ENCODE measurements at regions of chr22 and their contacts with region 1.

Region 1: GRCh38 chr22:30289134-30289979 is at the start of gene CASTOR1:
- DNase-seq: peak; percentile 99
- ATAC-seq: peak; percentile 91
- H3K4me3 ChIP-seq: peak within 1 kb of the TSS; percentile 56 to 87
- H3K27ac ChIP-seq: peak within 1 kb of the TSS; percentile 69 to 85
- H3K4me1 ChIP-seq: no peaks in the 10 kb centered on the region
- H3K27me3 ChIP-seq: no peaks in the 10 kb centered on the region
- total RNA-seq, gene CASTOR1: 13.5 to 14.0 TPM

Region 2: GRCh38 chr22:30121960-30122359 is 167.4 kb before region 1 on chr22:
- intact Hi-C with region 1: no loop called
- DNase-seq: no peak
- ATAC-seq: no peak
- H3K4me3 ChIP-seq: no peak overlapping the region
- H3K27ac ChIP-seq: no peak overlapping the region
- H3K4me1 ChIP-seq: no peaks in the 10 kb centered on the region
- H3K27me3 ChIP-seq: no peaks in the 10 kb centered on the region

Region 3: DNA sequence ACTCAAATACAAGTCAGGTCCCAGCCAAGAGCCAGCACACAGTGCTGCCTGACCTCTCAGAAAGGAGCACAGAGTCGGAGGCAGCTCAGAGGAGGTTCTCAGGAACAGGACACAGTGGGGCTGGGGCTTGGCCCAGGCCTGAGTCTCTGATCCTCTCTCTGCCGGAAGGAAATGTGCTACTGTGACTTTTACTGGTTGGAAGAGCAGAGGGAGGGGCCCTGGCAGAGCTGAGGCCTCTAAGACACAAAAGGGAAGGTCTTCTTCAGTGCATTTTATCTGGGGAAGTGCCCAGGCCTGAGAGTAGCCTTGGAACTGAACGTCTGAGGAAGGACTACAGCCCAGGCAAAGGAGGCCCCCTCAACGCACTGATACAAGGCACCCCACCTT is 16.2 kb after region 1 on chr22:
- intact Hi-C with region 1: loop called in 1 of 2 experiments (anchors 2 kb)
- DNase-seq: peak in 1 of 2 donors; percentile 84
- ATAC-seq: peak; percentile 74
- H3K4me3 ChIP-seq: no peak overlapping the region
- H3K27ac ChIP-seq: peak overlapping the region; percentile 61 to 90
- H3K4me1 ChIP-seq: peaks cover 5 to 11% of the 10 kb centered on the region in 2 donors
- H3K27me3 ChIP-seq: no peaks in the 10 kb centered on the region

Region 4: GRCh38 chr22:30326706-30327362 is 37.5 kb after region 1 on chr22 and contains the start of gene TBC1D10A:
- intact Hi-C with region 1: loop called (anchors 1 to 5 kb)
- DNase-seq: peak; percentile 92 to 94
- ATAC-seq: peak; percentile 93
- H3K4me3 ChIP-seq: peak within 1 kb of the TSS; percentile 69 to 96
- H3K27ac ChIP-seq: peak within 1 kb of the TSS; percentile 33 to 91
- H3K4me1 ChIP-seq: no peaks in the 10 kb centered on the region
- H3K27me3 ChIP-seq: no peaks in the 10 kb centered on the region
- total RNA-seq, gene TBC1D10A: 32.9 to 45.5 TPM

Region 5: GRCh38 chr22:30340911-30341685 is 51.7 kb after region 1 on chr22:
- intact Hi-C with region 1: loop called (anchors 5 kb)
- DNase-seq: peak; percentile 84 to 90
- ATAC-seq: peak; percentile 88
- H3K4me3 ChIP-seq: no peak overlapping the region
- H3K27ac ChIP-seq: peak overlapping the region; percentile 19 to 53
- H3K4me1 ChIP-seq: no peaks in the 10 kb centered on the region
- H3K27me3 ChIP-seq: no peaks in the 10 kb centered on the region

Region 6: GRCh38 chr22:30356449-30357235 is 67.3 kb after region 1 on chr22 and contains the starts of genes CCDC157 and SF3A1:
- intact Hi-C with region 1: loop called in 1 of 2 experiments (anchors 2 kb)
- DNase-seq: peak; percentile 94 to 97
- ATAC-seq: peak; percentile 98
- H3K4me3 ChIP-seq: peak within 1 kb of the TSS; percentile 53 to 71
- H3K27ac ChIP-seq: peak within 1 kb of the TSS in 1 of 2 donors; percentile 90
- H3K4me1 ChIP-seq: no peaks in the 10 kb centered on the region
- H3K27me3 ChIP-seq: no peaks in the 10 kb centered on the region
- total RNA-seq, gene CCDC157: 0.87 to 2.4 TPM
- total RNA-seq, gene SF3A1: 112 to 116 TPM

Region 7: DNA sequence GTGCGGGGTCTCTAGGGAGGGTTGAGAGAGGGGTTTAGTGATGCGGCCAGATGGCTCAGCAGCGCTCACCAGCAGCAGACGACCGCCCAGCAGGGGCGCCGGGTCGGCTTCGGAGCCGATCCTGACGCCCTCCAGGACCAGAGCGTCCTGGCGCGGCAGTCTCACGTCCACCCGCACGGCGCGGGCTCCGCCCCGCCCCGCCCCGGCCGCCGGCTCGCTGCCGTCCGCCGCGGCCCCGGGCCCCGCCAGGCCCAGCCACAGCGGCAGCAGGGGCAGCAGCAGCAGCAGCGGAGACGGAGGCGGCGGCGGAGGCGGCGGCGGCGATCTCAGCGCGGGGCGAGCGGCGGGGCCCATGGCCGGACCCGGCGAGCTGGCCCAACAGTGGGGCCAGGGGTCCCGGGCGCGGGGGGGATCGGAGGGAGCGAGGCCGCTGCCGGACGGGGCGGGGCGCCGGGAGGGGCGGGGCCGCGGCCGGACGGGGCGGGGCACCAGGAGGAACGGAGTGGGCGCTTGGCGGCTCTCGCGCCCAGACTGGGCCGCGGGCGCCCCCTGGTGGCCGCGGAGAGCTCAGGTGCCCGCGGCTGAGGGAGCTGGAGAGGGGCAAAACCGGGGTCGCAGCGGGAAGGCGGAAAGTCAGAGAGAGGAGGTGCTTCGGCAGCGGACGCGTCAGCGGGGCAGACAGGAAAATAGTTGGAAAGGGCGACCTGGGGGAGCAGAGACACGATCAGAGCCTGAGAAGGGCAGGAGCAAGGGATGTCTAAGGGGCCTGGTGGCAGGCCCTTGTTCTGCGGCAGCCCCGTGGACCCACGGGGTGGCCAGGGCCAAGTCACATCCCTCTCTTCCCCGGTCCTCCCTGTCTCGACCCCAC is 97.8 kb after region 1 on chr22 and contains the start of gene RNF215:
- intact Hi-C with region 1: loop called (anchors 1 to 2 kb)
- DNase-seq: peak; percentile 86 to 94
- ATAC-seq: peak; percentile 95
- H3K4me3 ChIP-seq: peak within 1 kb of the TSS; percentile 56 to 88
- H3K27ac ChIP-seq: no peak within 1 kb of the TSS
- H3K4me1 ChIP-seq: no peaks in the 10 kb centered on the region
- H3K27me3 ChIP-seq: no peaks in the 10 kb centered on the region
- total RNA-seq, gene RNF215: 15.6 to 20.9 TPM

Measured in aorta (tissue), 5 donors.